Activated CD4-positive, alpha-beta T cell treated with anti-CD3 and anti-CD28 coated beads, Interleukin-2, amount 10 ng/mL, durations not matched to agents 24 days and 14 days (primary cell): ENCODE measurements at regions of chr7 and their contacts with region 1.

Region 1: DNA sequence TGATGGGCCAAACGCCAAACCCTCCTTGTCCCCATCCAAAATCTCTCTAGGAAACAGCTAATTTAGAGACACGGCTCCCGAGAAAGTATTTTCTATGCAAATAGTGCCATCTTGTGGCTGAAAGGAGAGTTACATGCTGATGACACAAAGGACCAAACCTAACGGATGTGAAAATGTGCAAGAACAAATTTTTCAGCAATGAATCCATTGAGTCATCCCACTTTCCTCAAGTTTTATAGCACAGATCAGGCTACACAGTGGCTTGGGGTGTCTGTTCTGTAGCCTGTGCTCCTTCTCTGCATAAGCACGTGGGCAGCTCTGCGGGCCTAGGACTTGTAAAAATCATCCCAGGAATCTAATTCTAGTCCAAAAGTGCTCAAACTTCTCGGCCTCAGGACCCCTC is 154.8 kb upstream of the PRR15 start:
- DNase-seq: peak; percentile 88
- H3K4me3 Mint-ChIP-seq: no peak overlapping the region
- H3K27ac Mint-ChIP-seq: no peak overlapping the region
- H3K4me1 Mint-ChIP-seq: peaks cover 2% of the 10 kb centered on the region
- H3K27me3 Mint-ChIP-seq: peaks cover 5% of the 10 kb centered on the region

Region 2: DNA sequence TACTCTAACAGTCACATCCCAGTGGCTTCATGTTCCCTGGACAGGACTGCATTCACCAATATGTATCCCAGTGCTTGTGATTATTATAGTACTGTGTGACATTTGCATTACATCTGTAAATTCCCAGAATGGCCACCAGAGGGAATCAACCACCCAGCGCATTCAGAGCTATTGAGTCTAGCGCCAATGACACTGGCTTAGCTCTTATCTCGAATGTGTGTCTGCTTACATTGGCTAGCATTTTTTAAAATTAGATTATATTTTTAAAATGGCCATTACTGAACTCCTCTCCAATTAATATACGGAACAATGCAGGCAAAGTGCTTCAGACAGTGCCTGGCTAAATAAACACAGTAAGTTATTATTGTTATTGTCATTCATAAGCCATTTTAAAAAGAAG is 487.0 kb before region 1 on chr7:
- intact Hi-C with region 1: loop called (anchors 1 kb)
- DNase-seq: peak; percentile 75
- H3K4me3 Mint-ChIP-seq: no peak overlapping the region
- H3K27ac Mint-ChIP-seq: no peak overlapping the region
- H3K4me1 Mint-ChIP-seq: peaks cover 14% of the 10 kb centered on the region
- H3K27me3 Mint-ChIP-seq: peaks cover 20% of the 10 kb centered on the region

Region 3: DNA sequence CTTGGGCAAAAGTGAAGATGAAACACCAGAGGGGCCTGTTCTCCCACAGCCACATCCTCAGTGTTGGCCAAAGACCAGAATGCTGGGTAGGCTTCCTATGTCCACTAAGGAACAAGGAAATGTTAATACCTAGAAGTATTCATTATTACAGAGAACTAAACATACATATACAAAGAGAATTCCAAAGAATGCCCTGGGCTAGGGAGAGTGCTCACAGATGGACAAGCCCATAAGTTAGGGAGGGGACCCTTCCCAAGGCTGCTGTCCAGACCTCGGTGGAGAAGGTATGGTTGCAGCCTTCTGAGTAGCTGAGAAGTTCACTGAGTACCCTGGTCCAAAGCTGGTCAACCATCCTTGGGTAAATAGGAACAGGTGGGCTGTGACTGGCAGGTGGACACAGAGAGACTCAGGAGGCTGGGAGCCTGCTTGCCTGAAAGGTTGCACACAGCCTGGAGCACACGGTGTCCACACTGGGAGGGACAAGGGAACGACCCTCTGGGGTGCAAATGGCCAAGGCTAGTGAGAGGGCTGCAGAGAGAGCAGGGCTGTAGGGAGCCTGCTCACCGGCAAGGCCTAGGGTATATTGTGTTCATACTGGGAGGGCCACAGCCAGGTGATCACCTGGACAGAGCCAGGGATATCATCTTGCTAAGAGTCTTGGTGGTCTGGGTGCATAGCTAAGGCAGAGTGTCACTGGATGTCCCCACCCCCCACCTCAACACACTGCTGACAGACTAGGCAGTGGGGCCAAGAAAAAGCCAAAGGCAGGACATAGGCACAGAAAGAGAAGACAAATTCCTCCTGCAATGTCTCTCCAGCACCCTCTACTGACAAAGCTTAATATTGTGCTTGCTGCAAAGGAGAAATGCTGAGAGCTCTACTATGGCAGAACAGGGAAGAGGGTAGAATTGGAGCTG is 302.8 kb before region 1 on chr7:
- intact Hi-C with region 1: loop called (anchors 5 kb)
- DNase-seq: peak; percentile 74
- H3K4me3 Mint-ChIP-seq: no peak overlapping the region
- H3K27ac Mint-ChIP-seq: no peak overlapping the region
- H3K4me1 Mint-ChIP-seq: peaks cover 3% of the 10 kb centered on the region
- H3K27me3 Mint-ChIP-seq: peaks cover 7% of the 10 kb centered on the region

Region 4: DNA sequence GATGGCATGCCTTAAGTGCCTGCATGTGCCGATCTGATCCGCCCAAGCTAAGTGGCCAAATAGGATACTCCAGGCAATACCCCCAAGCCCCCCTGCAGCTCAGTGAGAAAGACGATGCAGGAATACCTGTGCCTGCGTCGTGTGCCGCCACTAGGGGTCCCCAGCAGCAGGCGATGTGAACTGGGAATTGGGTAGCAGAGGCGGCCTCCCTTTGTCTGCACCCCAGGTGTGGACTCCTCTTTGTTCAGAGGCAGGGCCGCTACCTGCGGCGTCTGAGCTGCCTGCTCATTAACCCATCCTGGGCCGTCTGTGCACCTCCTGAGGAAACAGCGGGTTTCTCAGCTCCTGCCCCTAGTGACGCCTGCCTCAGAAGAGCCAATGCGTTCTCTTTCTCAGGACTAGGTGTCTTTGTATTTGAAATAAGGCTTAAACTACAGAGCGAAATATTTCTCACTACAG is 219.1 kb before region 1 on chr7:
- intact Hi-C with region 1: loop called (anchors 1 kb)
- DNase-seq: peak; percentile 82
- H3K4me3 Mint-ChIP-seq: no peak overlapping the region
- H3K27ac Mint-ChIP-seq: no peak overlapping the region
- H3K4me1 Mint-ChIP-seq: peaks cover 2% of the 10 kb centered on the region
- H3K27me3 Mint-ChIP-seq: peaks cover 43% of the 10 kb centered on the region

Region 5: DNA sequence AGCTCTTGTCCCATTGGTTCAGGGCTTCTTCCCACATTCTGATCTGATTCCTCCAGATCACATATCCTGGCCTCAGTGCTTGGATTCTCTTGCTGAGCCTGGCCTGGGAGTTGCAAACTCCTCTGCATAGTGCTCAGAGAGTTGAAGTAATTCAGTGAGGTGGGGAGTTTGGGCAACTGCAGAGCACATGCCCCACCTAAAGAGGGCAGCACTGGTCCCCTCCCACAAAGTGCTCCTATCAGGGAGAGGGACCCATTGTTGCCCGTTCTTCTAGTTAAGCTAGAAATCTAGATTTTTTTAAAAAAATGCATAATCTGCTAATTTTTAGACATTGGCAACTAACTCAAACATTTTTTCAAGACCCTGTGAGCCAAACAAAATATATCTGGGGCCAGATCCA is 169.2 kb before region 1 on chr7:
- intact Hi-C with region 1: loop called (anchors 2 kb)
- DNase-seq: peak; percentile 65
- H3K4me3 Mint-ChIP-seq: no peak overlapping the region
- H3K27ac Mint-ChIP-seq: no peak overlapping the region
- H3K4me1 Mint-ChIP-seq: peaks cover 13% of the 10 kb centered on the region
- H3K27me3 Mint-ChIP-seq: peaks cover 27% of the 10 kb centered on the region

Region 6: DNA sequence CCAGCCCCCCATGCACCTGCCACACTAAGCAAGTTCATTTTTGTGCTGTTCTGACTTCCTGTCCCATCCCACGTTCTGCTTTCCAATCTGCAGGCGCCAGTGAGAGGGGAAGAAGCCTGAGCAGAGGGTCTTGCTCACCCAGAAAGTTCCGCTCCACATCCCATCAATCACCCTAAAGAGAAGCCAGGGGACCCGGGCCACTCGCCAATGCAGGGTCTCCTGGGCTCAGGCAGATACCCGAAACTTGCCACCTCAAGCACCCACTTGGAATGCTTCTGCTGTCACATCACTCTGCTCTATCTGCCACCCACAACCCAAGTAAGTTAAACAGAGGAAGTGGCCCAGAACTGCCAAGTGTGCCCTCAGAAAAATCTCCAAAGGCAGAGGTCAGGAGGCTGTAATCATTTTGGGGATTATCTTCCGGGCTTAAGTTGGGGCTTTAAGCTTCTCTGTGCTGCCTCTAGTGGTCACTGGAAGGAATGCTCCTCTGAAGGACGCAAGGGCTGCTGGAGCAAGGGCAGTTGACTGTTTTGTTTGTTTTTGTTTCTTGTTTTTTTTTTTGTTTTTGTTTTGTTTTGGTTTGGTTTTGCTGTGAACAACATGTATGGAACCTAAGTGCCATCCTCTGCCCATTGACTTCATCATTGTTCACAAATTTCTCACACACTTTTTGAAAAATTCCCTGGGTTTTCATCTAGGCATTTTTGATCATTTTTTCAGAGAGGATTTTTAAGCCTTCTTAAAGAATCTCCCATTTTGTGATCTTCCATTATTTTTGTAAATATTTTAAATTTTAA is 180.3 kb after region 1 on chr7:
- intact Hi-C with region 1: no loop called
- DNase-seq: peak; percentile 77
- H3K4me3 Mint-ChIP-seq: no peak overlapping the region
- H3K27ac Mint-ChIP-seq: no peak overlapping the region
- H3K4me1 Mint-ChIP-seq: peaks cover 4% of the 10 kb centered on the region
- H3K27me3 Mint-ChIP-seq: no peaks in the 10 kb centered on the region